ENCODE measurements at regions of chr1 and their contacts with region 1.

Region 1: DNA sequence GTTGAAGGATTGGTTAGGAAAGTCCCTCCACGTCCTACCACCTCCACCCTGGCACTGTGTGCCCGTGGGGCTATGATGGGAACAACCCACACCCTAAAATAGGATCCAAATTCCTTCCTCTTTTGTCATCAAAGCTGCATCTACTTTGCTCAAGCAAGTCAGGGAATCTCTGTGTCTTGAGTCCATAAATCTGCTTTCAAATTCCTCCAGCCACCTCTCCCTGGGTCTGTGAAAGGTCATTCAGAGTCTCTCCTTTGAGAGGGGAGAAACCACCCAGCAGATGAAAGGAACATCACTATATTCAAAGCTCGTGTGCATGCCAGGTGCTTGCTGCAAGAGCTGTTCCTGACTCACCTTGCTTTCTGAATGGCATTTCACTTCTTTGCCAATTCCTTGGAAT is 243.6 kb downstream of the TM2D1 start:
- DNase-seq: no peak
- H3K4me3 Mint-ChIP-seq: no peak overlapping the region
- H3K27ac Mint-ChIP-seq: no peak overlapping the region
- H3K4me1 Mint-ChIP-seq: no peaks in the 10 kb centered on the region
- H3K27me3 Mint-ChIP-seq: peaks cover 20% of the 10 kb centered on the region

Region 2: GRCh38 chr1:61403679-61404596 is 77.4 kb before region 1 on chr1:
- intact Hi-C with region 1: no loop called
- DNase-seq: no peak
- H3K4me3 Mint-ChIP-seq: no peak overlapping the region
- H3K27ac Mint-ChIP-seq: no peak overlapping the region
- H3K4me1 Mint-ChIP-seq: no peaks in the 10 kb centered on the region
- H3K27me3 Mint-ChIP-seq: peaks cover 24% of the 10 kb centered on the region

Region 3: DNA sequence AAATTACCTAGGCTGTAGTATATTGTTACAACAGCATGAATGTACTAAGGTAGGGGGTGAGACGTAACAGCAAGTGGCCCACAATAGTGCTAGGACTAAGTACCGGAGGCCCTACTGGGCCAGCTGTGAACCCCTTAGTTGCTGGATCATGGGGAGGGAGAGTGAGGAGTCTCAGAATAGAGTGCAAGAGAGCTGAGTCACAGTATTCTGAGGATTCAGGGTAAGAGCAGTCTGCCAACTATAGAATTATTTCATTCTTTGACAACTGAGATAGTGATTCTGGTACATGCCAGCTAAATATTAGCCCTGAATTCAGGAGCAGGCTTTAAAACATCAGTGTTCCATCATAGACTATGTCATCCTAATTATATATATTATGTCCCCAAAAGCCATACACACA is 24.9 kb after region 1 on chr1:
- intact Hi-C with region 1: no loop called
- DNase-seq: no peak
- H3K4me3 Mint-ChIP-seq: no peak overlapping the region
- H3K27ac Mint-ChIP-seq: no peak overlapping the region
- H3K4me1 Mint-ChIP-seq: no peaks in the 10 kb centered on the region
- H3K27me3 Mint-ChIP-seq: no peaks in the 10 kb centered on the region

Region 4: GRCh38 chr1:61523893-61524605 is 42.7 kb after region 1 on chr1:
- intact Hi-C with region 1: no loop called
- DNase-seq: no peak
- H3K4me3 Mint-ChIP-seq: no peak overlapping the region
- H3K27ac Mint-ChIP-seq: no peak overlapping the region
- H3K4me1 Mint-ChIP-seq: no peaks in the 10 kb centered on the region
- H3K27me3 Mint-ChIP-seq: peaks cover 17% of the 10 kb centered on the region

Region 5: DNA sequence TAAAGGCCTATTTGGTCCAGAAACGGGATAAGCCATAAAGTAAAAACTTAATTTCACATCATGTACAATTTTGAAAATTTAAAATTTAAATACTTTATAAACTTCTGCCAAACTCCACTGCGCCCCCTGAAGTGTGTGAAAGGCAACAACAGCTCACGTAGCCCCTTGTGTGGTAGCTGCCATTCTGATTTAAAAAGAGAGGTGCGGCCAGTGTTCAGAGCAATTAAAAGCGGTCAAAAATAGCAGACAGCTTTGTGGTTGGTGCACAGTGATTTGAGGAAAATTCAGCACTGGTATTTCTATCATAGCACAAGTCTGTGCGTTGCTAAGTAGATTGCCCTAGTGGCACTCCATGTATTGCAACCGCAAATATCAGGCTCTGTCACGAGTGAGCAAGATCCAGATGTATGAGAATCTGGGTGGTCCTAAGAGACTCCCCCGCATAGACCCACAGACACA is 1425.1 kb after region 1 on chr1:
- intact Hi-C with region 1: loop called (anchors 10 kb)
- DNase-seq: no peak
- H3K4me3 Mint-ChIP-seq: no peak overlapping the region
- H3K27ac Mint-ChIP-seq: no peak overlapping the region
- H3K4me1 Mint-ChIP-seq: peaks cover 7% of the 10 kb centered on the region
- H3K27me3 Mint-ChIP-seq: peaks cover 9% of the 10 kb centered on the region